Activated naive CD8-positive, alpha-beta T cell treated with anti-CD3 and anti-CD28 coated beads, Interleukin-2, amount 10 ng/mL, durations not matched to agents 7 days and 5 days (primary cell): ENCODE measurements at regions of chr4 and their contacts with region 1.

Region 1: GRCh38 chr4:80125252-80126177 is 52.5 kb upstream of the ANTXR2 start:
- DNase-seq: no peak
- ATAC-seq: peak; percentile 89
- H3K4me3 Mint-ChIP-seq: peak overlapping the region; percentile 72
- H3K27ac Mint-ChIP-seq: peak overlapping the region; percentile 89
- H3K4me1 Mint-ChIP-seq: peaks cover 40% of the 10 kb centered on the region
- H3K27me3 Mint-ChIP-seq: no peaks in the 10 kb centered on the region

Region 2: DNA sequence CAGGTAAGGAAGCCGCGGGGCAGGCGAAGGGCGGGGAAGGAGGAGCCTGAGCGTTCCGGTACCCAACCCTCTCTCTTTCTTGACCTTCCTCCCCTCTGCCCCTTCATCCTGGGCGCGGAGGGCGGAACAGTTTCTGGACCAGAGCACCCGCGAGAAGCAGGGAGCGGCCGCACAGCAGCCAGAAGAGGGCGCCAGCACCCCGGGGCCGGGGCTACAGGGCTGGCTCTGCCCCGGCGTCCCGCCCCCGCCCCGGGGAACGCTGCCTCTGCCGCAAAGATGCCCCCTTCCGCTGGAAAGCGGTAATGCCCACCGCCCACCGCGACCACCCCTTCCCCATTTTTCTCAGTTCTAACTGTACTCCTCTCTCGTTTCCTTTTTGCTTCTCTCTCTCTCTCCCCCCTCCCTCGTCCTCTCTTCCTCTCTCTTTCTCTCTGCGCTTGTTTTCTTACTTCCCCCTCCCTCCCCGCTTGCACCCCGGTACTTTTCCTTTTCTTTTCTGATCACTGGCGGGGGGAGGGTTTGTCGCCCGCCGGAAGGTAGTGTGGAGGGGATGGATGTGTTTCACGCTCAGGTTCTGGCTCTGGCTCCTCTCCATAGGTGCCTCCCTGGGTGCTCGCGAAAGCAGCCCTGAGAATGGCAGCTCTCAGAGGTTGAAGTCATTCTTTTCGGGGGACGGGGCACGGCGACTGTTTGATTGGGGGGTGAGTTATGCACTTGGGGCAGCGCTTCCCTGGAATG is 58.7 kb after region 1 on chr4:
- POLR2A ChIA-PET with region 1: interaction called, 22 read pairs
- DNase-seq: peak; percentile 97
- ATAC-seq: peak; percentile 94
- H3K4me3 Mint-ChIP-seq: peak overlapping the region; percentile 93
- H3K27ac Mint-ChIP-seq: peak overlapping the region; percentile 91
- H3K4me1 Mint-ChIP-seq: peaks cover 30% of the 10 kb centered on the region
- H3K27me3 Mint-ChIP-seq: peaks cover 33% of the 10 kb centered on the region